ENCODE measurements at regions of chr3 and their contacts with region 1.

Region 1: DNA sequence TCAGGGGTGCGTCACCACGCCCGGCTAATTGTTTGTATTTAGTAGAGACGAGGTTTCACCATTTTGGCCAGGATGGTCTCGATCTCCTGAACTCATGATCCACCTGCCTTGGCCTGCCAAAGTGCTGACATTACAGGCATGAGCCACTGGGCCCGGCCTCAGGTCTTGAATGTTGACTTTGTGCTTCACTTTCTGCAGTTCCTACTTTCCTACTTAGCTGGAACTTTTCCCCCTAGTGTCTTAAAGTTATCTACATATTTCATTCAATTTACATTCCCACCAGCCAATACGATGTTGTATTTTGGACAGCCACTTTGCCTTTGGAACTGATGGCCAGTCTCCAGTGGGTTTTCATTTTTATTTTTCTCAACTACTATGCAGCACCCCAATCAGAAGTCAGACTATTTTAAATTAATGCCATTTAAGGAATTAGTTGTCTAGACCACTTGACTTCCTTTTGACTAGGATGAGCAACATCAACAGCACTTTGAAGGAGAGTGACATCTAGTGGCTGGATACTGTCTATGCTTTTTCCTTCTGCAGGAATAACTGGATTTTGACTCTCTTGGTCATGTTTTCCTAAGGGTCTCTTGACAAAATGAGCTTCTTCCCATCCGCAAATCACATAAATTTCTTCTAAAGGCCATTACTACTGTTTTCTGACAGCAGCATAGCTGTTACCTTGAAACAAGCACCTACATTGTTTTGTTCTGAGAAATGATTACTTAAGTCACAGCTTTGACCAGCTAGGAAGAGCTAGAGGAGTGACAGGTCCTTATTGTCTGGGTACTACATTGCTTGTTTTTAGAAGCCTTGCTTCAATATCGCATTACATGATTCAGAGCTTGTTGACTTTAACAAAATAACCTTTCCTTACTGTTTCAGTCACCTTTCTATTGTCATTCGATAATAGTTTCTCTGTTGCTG is 140.2 kb downstream of the ITPR1 start:
- DNase-seq: peak in 2 of 4 donors; percentile 54 to 67
- ATAC-seq: peak; percentile 92
- H3K4me3 ChIP-seq: no peak overlapping the region
- H3K27ac ChIP-seq: no peak overlapping the region
- H3K4me1 ChIP-seq: peaks cover 0 to 5% of the 10 kb centered on the region in 2 donors
- H3K27me3 ChIP-seq: no peaks in the 10 kb centered on the region
- CTCF ChIP-seq: peak; percentile 76 to 93

Region 2: DNA sequence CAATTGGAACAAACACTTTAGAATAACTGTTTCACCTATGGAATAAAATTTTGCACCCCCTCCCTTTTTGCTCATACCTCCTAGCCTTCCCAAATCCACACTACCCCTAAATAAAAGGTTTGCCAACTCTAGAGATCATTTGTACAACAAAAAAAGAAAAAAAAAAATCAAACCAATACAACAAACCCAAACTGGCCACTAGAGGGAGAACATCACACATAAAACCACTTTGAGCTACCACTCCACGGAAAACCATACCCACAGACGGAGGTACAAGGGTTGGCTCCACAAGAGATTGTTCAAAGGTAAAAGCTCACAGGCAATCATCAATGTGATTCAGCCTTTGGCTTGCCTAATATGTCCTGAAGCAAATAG is 282.6 kb before region 1 on chr3:
- intact Hi-C with region 1: loop called in 1 of 2 experiments (anchors 5 kb)
- DNase-seq: peak in 2 of 4 donors; percentile 59 to 76
- ATAC-seq: peak; percentile 95
- H3K4me3 ChIP-seq: peak overlapping the region; percentile 14 to 17
- H3K27ac ChIP-seq: peak overlapping the region; percentile 68 to 82
- H3K4me1 ChIP-seq: peaks cover under 1 to 21% of the 10 kb centered on the region in 2 donors
- H3K27me3 ChIP-seq: no peaks in the 10 kb centered on the region
- CTCF ChIP-seq: peak; percentile 69

Measured in left lung (tissue), 14 donors.